ENCODE measurements at regions of chr2 and their contacts with region 1.

Region 1: GRCh38 chr2:64488050-64488974 is 34.4 kb downstream of the LGALSL start:
- DNase-seq: peak; percentile 86
- ATAC-seq: peak; percentile 95
- H3K4me3 Mint-ChIP-seq: no peak overlapping the region
- H3K27ac Mint-ChIP-seq: no peak overlapping the region
- H3K4me1 Mint-ChIP-seq: peaks cover 8% of the 10 kb centered on the region
- H3K27me3 Mint-ChIP-seq: peaks cover 1% of the 10 kb centered on the region
- CTCF ChIP-seq: peak; percentile 96

Region 2: GRCh38 chr2:64045938-64046337 is 442.4 kb before region 1 on chr2:
- CTCF ChIA-PET with region 1: interaction called, 15 read pairs
- POLR2A ChIA-PET with region 1: no interaction called
- intact Hi-C with region 1: loop called (anchors 5 kb)
- DNase-seq: no peak
- ATAC-seq: no peak
- H3K4me3 Mint-ChIP-seq: no peak overlapping the region
- H3K27ac Mint-ChIP-seq: no peak overlapping the region
- H3K4me1 Mint-ChIP-seq: peaks cover 8% of the 10 kb centered on the region
- H3K27me3 Mint-ChIP-seq: no peaks in the 10 kb centered on the region
- CTCF ChIP-seq: no peak

Region 3: GRCh38 chr2:64338910-64339500 is 149.3 kb before region 1 on chr2:
- CTCF ChIA-PET with region 1: interaction called, 11 read pairs
- POLR2A ChIA-PET with region 1: interaction called, 3 read pairs
- intact Hi-C with region 1: no loop called
- DNase-seq: peak; percentile 81
- ATAC-seq: peak; percentile 97
- H3K4me3 Mint-ChIP-seq: no peak overlapping the region
- H3K27ac Mint-ChIP-seq: no peak overlapping the region
- H3K4me1 Mint-ChIP-seq: peaks cover 8% of the 10 kb centered on the region
- H3K27me3 Mint-ChIP-seq: no peaks in the 10 kb centered on the region
- CTCF ChIP-seq: no peak

Region 4: DNA sequence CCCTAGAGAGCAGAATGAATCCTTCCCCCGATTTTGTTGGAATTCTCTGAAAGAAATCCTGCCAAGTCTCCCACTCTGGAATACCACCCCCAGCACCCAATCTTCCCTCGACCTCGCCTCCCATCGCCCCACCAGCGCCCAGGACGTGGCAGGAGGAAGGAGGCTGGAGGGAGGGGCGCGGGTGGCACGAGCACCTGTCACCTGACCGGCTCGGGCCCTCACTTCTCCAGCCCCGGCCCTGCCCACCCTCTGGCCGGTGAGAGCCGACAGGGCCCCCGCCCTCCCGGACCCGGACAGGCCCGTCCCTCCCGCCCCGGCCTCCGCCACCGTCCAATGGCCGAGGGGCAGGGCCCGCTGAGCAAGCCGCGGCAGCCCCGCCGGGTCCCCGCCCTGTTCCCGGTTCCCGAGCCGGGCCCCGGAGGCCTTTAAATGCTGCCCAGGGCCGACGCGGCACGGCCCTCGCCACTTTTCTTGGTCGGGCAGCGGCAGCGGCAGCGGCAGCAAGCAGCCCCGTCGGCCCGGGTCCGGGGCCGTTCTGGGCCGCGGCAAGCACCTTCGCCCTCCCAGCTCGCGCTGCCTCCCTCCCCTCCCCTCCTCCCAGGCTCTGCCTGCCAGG is 34.4 kb before region 1 on chr2 and contains the start of gene LGALSL:
- CTCF ChIA-PET with region 1: interaction called, 16 read pairs
- POLR2A ChIA-PET with region 1: no interaction called
- intact Hi-C with region 1: no loop called
- DNase-seq: no peak
- ATAC-seq: peak; percentile 78
- H3K4me3 Mint-ChIP-seq: peak within 1 kb of the TSS; percentile 77
- H3K27ac Mint-ChIP-seq: peak within 1 kb of the TSS; percentile 74
- H3K4me1 Mint-ChIP-seq: peaks cover 9% of the 10 kb centered on the region
- H3K27me3 Mint-ChIP-seq: peaks cover 4% of the 10 kb centered on the region
- CTCF ChIP-seq: no peak
- total RNA-seq, gene LGALSL: 3.8 to 3.9 TPM

Region 5: GRCh38 chr2:64474121-64474571 is 14.2 kb before region 1 on chr2:
- CTCF ChIA-PET with region 1: interaction called, 16 read pairs
- POLR2A ChIA-PET with region 1: no interaction called
- intact Hi-C with region 1: no loop called
- DNase-seq: no peak
- ATAC-seq: no peak
- H3K4me3 Mint-ChIP-seq: no peak overlapping the region
- H3K27ac Mint-ChIP-seq: no peak overlapping the region
- H3K4me1 Mint-ChIP-seq: peaks cover 11% of the 10 kb centered on the region
- H3K27me3 Mint-ChIP-seq: no peaks in the 10 kb centered on the region
- CTCF ChIP-seq: no peak

Region 6: GRCh38 chr2:64523666-64524603 is 35.6 kb after region 1 on chr2 and contains the start of gene AFTPH:
- CTCF ChIA-PET with region 1: interaction called, 17 read pairs
- POLR2A ChIA-PET with region 1: no interaction called
- intact Hi-C with region 1: no loop called
- DNase-seq: peak; percentile 99
- ATAC-seq: peak; percentile 93
- H3K4me3 Mint-ChIP-seq: peak within 1 kb of the TSS; percentile 99
- H3K27ac Mint-ChIP-seq: peak within 1 kb of the TSS; percentile 100
- H3K4me1 Mint-ChIP-seq: peaks cover 33% of the 10 kb centered on the region
- H3K27me3 Mint-ChIP-seq: no peaks in the 10 kb centered on the region
- CTCF ChIP-seq: no peak
- total RNA-seq, gene AFTPH: 30.6 to 31.1 TPM

Region 7: GRCh38 chr2:64751286-64752260 is 263.3 kb after region 1 on chr2:
- CTCF ChIA-PET with region 1: no interaction called
- POLR2A ChIA-PET with region 1: no interaction called
- intact Hi-C with region 1: no loop called
- DNase-seq: peak; percentile 60
- ATAC-seq: no peak
- H3K4me3 Mint-ChIP-seq: peak overlapping the region; percentile 93
- H3K27ac Mint-ChIP-seq: peak overlapping the region; percentile 97
- H3K4me1 Mint-ChIP-seq: peaks cover 28% of the 10 kb centered on the region
- H3K27me3 Mint-ChIP-seq: no peaks in the 10 kb centered on the region
- CTCF ChIP-seq: peak; percentile 39

Measured in activated CD8-positive, alpha-beta T cell treated with anti-CD3 and anti-CD28 coated beads for 36 hours (primary cell).